CD8-positive, alpha-beta memory T cell (primary cell): ENCODE measurements at regions of chr1 and their contacts with region 1.

Region 1: GRCh38 chr1:184973272-184974055 is 844 bp downstream of the NIBAN1 start:
- DNase-seq: peak in 4 of 5 donors; percentile 9 to 66 (median 43)
- H3K4me3 ChIP-seq: peak overlapping the region; percentile 93
- H3K4me3 Mint-ChIP-seq: peak overlapping the region; percentile 88 to 99 (median 98)
- H3K27ac ChIP-seq: peak overlapping the region; percentile 95
- H3K27ac Mint-ChIP-seq: peak overlapping the region; percentile 87 to 99 (median 98)
- H3K4me1 ChIP-seq: peaks cover 41% of the 10 kb centered on the region
- H3K4me1 Mint-ChIP-seq: peaks cover 58 to 74% (median 72%) of the 10 kb centered on the region in 3 donors
- H3K27me3 ChIP-seq: no peaks in the 10 kb centered on the region
- H3K27me3 Mint-ChIP-seq: no peaks in the 10 kb centered on the region

Region 2: GRCh38 chr1:184684285-184685074 is 289.0 kb before region 1 on chr1:
- CTCF ChIA-PET with region 1: no interaction called
- POLR2A ChIA-PET with region 1: interaction called, 10 read pairs
- DNase-seq: no peak
- H3K4me3 ChIP-seq: no peak overlapping the region
- H3K4me3 Mint-ChIP-seq: no peak overlapping the region
- H3K27ac ChIP-seq: no peak overlapping the region
- H3K27ac Mint-ChIP-seq: no peak overlapping the region
- H3K4me1 ChIP-seq: no peaks in the 10 kb centered on the region
- H3K4me1 Mint-ChIP-seq: peaks cover 0 to 3% (median 0%) of the 10 kb centered on the region in 3 donors
- H3K27me3 ChIP-seq: no peaks in the 10 kb centered on the region
- H3K27me3 Mint-ChIP-seq: no peaks in the 10 kb centered on the region

Region 3: GRCh38 chr1:184954231-184954995 is 19.1 kb before region 1 on chr1:
- CTCF ChIA-PET with region 1: no interaction called
- POLR2A ChIA-PET with region 1: no interaction called
- DNase-seq: no peak
- H3K4me3 ChIP-seq: no peak overlapping the region
- H3K4me3 Mint-ChIP-seq: peak overlapping the region in 3 of 7 donors; percentile 23 to 33 (median 31)
- H3K27ac ChIP-seq: no peak overlapping the region
- H3K27ac Mint-ChIP-seq: peak overlapping the region in 7 of 8 donors; percentile 25 to 86 (median 76)
- H3K4me1 ChIP-seq: no peaks in the 10 kb centered on the region
- H3K4me1 Mint-ChIP-seq: peaks cover 38 to 77% (median 75%) of the 10 kb centered on the region in 3 donors
- H3K27me3 ChIP-seq: no peaks in the 10 kb centered on the region
- H3K27me3 Mint-ChIP-seq: peaks cover 0 to 1% of the 10 kb centered on the region in 2 donors

Region 4: GRCh38 chr1:185008838-185009237 is 35.4 kb after region 1 on chr1:
- CTCF ChIA-PET with region 1: no interaction called
- POLR2A ChIA-PET with region 1: no interaction called
- DNase-seq: no peak
- H3K4me3 ChIP-seq: no peak overlapping the region
- H3K4me3 Mint-ChIP-seq: no peak overlapping the region
- H3K27ac ChIP-seq: no peak overlapping the region
- H3K27ac Mint-ChIP-seq: no peak overlapping the region
- H3K4me1 ChIP-seq: no peaks in the 10 kb centered on the region
- H3K4me1 Mint-ChIP-seq: no peaks in the 10 kb centered on the region
- H3K27me3 ChIP-seq: no peaks in the 10 kb centered on the region
- H3K27me3 Mint-ChIP-seq: peaks cover 0 to 10% of the 10 kb centered on the region in 2 donors